K562 (cell line): ENCODE measurements at regions of chr17 and their contacts with region 1.

Region 1: DNA sequence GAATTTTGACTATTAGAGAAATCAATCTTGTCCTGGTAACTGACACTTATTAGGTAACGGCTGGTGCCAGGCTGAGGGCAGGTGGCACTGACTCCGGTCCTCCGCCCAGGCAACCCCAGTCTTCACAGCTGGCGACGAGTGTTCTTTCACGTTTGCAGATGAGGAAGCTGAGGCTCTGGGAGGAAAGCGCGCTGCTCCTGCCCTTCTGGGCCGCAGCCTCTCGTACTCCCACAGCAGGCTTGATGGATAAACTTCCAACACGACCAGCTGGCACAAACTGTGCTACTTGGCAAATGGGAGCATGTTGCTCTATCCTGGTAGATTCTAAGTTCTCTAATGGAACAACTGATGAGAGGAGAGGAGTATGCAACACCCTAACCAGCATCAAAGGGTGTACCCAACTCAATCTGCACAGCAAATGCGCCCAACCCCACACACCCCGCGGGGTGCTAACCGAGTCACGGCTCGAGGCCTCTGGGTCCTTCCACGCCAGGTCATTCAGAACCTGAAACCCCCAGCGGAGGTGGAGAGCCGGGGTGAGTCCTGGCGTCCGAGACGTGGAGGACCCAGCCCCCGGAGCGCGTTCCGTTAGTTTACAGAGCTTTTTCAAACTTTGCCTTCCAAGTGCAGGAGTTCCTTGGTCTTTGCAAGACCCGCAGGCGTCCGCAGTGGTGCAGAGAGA is 477 bp upstream of the SLC47A1 start:
- DNase-seq: no peak
- ATAC-seq: no peak
- H3K4me3 ChIP-seq: no peak overlapping the region
- H3K27ac ChIP-seq: no peak overlapping the region
- H3K4me1 ChIP-seq: no peaks in the 10 kb centered on the region
- H3K27me3 ChIP-seq: peaks cover 0 to 37% of the 10 kb centered on the region in 2 experiments; a peak in 4 of 5 replicates
- CTCF ChIP-seq: no peak
- EP300 ChIP-seq: no peak
- POLR2A ChIP-seq: no peak
- RAD21 ChIP-seq: no peak

Region 2: DNA sequence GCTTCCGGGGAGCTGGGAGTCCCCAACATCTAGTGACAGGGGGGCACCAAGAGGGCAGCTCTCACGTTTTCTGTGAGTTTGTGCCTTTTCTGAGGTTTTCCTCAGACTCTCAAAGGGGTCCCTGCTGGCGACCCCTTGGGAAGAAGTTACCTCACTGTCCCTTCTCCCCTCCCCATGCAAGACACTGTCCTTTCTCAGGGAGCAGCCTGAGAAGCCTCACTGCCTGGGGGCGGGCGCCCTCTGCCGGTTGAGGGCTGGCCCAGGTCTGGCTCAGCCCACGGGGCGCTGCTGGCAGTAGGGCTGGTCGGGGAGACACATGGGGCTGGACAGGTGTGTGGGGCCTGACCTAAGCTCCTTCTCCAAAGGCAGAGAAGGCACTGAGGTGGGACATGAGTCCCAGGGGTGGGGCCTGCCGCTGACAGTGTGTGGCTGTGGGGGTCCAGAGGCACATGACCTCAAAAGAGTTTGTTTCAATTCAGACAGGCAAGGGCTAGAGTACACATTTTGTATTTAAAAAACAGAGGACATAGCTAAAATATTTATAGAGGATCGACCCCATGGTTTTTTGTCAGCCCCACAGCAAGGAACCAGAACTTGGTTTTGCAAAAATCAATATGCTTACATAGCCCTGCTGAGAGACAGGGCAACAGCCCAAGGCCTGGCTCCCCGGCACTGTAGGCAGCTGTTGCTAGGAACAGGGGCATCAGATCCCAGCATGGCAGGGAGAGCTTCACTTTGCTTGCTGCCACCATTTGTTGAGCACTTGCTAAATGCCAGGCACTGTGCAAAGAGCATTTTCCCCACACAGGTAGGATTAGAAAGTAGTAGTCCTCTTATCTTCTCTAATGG is 233.5 kb after region 1 on chr17:
- CTCF ChIA-PET with region 1: interaction called, 12 read pairs
- POLR2A ChIA-PET with region 1: no interaction called
- in situ Hi-C with region 1: no loop called
- intact Hi-C with region 1: no loop called
- DNase-seq: peak; percentile 69 to 72 (median 70)
- ATAC-seq: peak; percentile 99
- H3K4me3 ChIP-seq: no peak overlapping the region
- H3K27ac ChIP-seq: no peak overlapping the region
- H3K4me1 ChIP-seq: no peaks in the 10 kb centered on the region
- H3K27me3 ChIP-seq: peaks cover 0 to 14% of the 10 kb centered on the region in 2 experiments; a peak in 1 of 5 replicates
- CTCF ChIP-seq: peak; percentile 79 to 87 (median 80)
- EP300 ChIP-seq: no peak
- POLR2A ChIP-seq: no peak
- RAD21 ChIP-seq: peak; percentile 66 to 87